Posterior cingulate gyrus (tissue), 11 donors: ENCODE measurements at regions of chr12 and their contacts with region 1.

Region 1: DNA sequence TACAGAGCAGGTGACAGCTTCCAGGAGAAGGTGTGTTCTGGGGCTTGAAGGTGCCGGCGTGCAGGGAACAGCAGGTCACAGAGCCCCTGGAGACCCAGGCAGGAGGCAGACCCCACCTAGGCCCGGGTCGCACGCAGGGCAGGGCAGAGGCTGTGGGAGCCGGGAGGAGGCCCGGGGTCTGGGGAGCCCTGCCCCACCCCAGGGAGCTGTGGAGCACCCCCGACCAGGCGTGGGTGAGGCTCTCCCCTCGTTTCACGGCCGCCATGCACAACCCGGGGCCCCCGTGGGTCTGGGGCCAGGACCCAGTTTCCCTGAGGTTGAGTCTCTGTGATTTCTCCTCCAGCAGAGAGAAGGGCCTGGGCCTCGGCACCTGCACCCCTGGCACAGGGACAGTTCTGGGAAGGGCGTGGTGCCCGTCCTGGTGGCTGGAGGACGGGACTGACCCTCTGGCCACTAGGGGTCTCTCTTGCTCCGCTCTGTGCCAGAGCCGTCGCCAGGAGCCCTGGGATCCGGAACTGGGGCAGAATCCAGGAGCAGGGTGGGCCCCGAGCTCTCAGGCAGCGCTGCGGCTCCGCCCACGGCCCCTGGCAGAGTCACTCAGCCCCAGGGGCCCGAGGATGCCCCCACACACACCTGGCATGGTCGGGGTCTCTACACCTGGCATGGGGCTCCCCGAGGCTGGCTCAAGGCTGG is 75.2 kb upstream of the FBRSL1 start:
- DNase-seq: peak; percentile 53 to 96 (median 76)

Region 2: GRCh38 chr12:132523576-132524331 is 109.0 kb after region 1 on chr12:
- intact Hi-C with region 1: loop called (anchors 1 kb)
- DNase-seq: peak; percentile 67 to 96 (median 84)

Region 3: DNA sequence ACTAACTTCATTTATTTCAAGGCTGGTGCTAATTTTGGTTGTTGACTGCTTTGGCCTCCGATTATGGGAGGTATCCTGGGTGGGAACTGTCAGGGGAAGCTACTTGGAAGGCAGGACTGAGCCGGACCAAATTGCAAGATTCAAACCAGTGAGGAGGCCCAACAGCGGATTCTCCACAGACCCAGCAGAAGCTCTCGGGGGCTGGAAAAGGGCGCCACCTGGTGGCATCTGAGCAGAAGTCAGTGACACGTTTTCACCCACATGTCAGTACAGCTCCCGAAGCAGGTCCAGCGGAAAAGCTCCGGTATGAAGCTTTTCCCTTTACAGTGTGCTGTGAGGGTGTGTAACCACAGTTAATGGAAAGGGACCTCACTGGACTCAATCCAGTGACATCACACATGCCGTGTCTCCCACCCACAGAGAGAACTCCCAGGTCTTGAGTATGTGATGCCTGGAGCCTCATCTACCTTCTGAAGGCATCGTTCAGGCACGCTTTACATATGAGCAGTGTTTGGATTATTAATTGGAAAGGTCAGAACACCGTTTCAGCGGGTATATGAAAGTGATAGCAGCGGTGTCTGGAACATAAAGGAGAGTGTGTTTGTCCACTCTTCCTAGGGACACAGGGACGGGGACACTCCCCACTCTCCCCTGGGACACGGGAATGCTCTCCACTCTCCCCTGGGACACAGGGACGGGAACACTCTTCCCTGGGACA is 200.2 kb after region 1 on chr12:
- intact Hi-C with region 1: loop called (anchors 1 kb)
- DNase-seq: peak; percentile 67 to 98 (median 86)